A673 (cell line): ENCODE measurements at regions of chr10 and their contacts with region 1.

Region 1: GRCh38 chr10:76036111-76036940 is 604.9 kb downstream of the LRMDA start:
- DNase-seq: peak; percentile 55
- H3K4me3 ChIP-seq: no peak overlapping the region
- H3K27ac ChIP-seq: no peak overlapping the region
- H3K4me1 ChIP-seq: no peaks in the 10 kb centered on the region
- H3K27me3 ChIP-seq: peaks cover 7% of the 10 kb centered on the region
- CTCF ChIP-seq: peak; percentile 88

Region 2: GRCh38 chr10:76169246-76169645 is 132.9 kb after region 1 on chr10:
- CTCF ChIA-PET with region 1: no interaction called
- POLR2A ChIA-PET with region 1: no interaction called
- intact Hi-C with region 1: no loop called
- DNase-seq: no peak
- H3K4me3 ChIP-seq: no peak overlapping the region
- H3K27ac ChIP-seq: no peak overlapping the region
- H3K4me1 ChIP-seq: no peaks in the 10 kb centered on the region
- H3K27me3 ChIP-seq: no peaks in the 10 kb centered on the region
- CTCF ChIP-seq: no peak

Region 3: GRCh38 chr10:76185471-76186301 is 149.4 kb after region 1 on chr10:
- CTCF ChIA-PET with region 1: no interaction called
- POLR2A ChIA-PET with region 1: no interaction called
- intact Hi-C with region 1: no loop called
- DNase-seq: no peak
- H3K4me3 ChIP-seq: no peak overlapping the region
- H3K27ac ChIP-seq: no peak overlapping the region
- H3K4me1 ChIP-seq: no peaks in the 10 kb centered on the region
- H3K27me3 ChIP-seq: no peaks in the 10 kb centered on the region
- CTCF ChIP-seq: no peak

Region 4: GRCh38 chr10:76303682-76304316 is 267.5 kb after region 1 on chr10:
- CTCF ChIA-PET with region 1: interaction called, 6 read pairs
- POLR2A ChIA-PET with region 1: no interaction called
- intact Hi-C with region 1: loop called (anchors 2 kb)
- DNase-seq: peak; percentile 67
- H3K4me3 ChIP-seq: no peak overlapping the region
- H3K27ac ChIP-seq: no peak overlapping the region
- H3K4me1 ChIP-seq: peaks cover 3% of the 10 kb centered on the region
- H3K27me3 ChIP-seq: no peaks in the 10 kb centered on the region
- CTCF ChIP-seq: peak; percentile 65

Region 5: GRCh38 chr10:77004917-77005564 is 968.7 kb after region 1 on chr10:
- CTCF ChIA-PET with region 1: interaction called, 4 read pairs
- POLR2A ChIA-PET with region 1: no interaction called
- intact Hi-C with region 1: loop called (anchors 10 kb)
- DNase-seq: peak; percentile 70
- H3K4me3 ChIP-seq: no peak overlapping the region
- H3K27ac ChIP-seq: no peak overlapping the region
- H3K4me1 ChIP-seq: no peaks in the 10 kb centered on the region
- H3K27me3 ChIP-seq: peaks cover 17% of the 10 kb centered on the region
- CTCF ChIP-seq: peak; percentile 83